ENCODE measurements at regions of chr12 and their contacts with region 1.

Region 1: DNA sequence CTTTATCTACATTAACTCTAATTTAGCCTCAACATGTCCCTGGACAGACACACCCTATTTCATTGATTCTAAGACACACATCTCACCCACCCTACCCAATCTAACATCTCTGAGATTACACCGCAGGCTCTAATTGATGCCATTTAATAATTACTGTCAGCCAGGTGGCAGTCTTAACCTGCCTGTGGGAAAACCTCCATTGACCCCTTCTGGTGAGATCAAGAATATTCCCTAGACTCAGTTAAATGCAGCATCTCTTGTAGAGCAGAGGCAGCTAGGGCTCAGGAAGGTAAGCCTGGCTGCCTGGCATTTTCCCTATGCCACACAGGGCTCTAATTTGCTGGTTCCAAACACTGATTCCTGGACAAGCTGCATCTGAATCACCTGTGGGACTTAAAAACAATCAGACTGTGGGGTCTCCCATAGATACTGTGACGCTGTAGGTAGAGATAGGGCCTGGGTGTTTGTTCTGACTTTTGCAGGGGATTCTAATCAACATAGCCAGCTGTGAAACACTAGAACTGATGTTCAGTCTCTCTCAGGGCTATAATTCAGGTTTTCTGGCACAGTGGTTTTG is 14.3 kb downstream of the MCRS1 start:
- DNase-seq: peak; percentile 66 to 75 (median 74)
- H3K4me3 ChIP-seq: no peak overlapping the region
- H3K27ac ChIP-seq: no peak overlapping the region
- H3K4me1 ChIP-seq: peaks cover 0 to 18% (median 12%) of the 10 kb centered on the region in 4 experiments
- H3K27me3 ChIP-seq: peaks cover 0 to 8% (median 0%) of the 10 kb centered on the region in 5 experiments

Region 2: DNA sequence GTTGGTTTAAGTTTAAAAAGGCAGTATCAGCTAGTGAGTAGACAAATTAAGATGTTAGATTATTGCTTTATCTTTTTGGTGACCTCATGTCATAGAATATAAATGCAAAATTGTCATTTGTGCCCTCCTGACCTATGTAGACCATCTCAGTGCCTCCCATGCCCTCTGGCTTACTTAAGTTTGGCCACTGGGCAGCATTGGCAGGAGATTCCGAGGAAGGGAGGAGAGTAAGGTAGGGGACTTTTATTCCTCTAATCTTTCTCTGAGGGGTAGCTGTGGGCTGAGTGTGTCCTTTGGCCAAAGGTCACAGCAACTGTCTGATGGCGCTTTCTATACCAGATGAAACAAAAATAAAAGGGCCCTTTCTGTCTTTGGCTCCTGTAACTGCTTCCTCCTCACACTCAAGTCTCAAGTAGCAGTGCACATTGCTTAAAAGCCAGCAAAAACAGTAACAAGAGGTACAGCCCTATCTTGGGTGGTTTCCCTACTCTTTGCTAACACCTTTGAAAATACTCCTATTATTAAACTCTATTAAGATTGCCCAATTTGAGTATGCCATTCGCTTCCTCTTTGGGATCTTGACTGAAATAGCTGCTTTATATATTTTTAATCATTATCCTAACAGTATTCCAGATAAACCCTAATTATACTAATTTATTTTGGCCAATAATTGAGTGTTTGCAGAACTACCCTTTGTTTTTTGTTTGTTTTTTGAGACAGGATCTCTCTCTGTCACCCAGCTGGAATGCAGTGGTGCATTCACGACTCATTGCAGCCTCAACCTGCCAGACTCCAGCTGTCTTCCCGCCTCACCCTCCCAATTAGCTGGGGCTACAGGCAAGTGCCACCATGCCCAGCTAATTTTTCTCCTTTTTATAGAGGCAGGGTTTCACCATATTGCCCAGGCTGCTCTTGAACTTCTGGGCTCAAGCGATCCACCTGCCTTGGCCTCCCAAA is 71.2 kb before region 1 on chr12:
- CTCF ChIA-PET with region 1: no interaction called
- POLR2A ChIA-PET with region 1: no interaction called
- DNase-seq: no peak
- H3K4me3 ChIP-seq: no peak overlapping the region
- H3K27ac ChIP-seq: no peak overlapping the region
- H3K4me1 ChIP-seq: peaks cover 0 to 5% (median 2%) of the 10 kb centered on the region in 4 experiments
- H3K27me3 ChIP-seq: no peaks in the 10 kb centered on the region

Region 3: GRCh38 chr12:49567611-49568441 is 14.2 kb after region 1 on chr12 and contains the start of gene MCRS1:
- CTCF ChIA-PET with region 1: interaction called, 107 read pairs
- POLR2A ChIA-PET with region 1: interaction called, 4 read pairs
- DNase-seq: peak; percentile 92 to 97 (median 97)
- H3K4me3 ChIP-seq: peak within 1 kb of the TSS; percentile 87 to 99 (median 94)
- H3K27ac ChIP-seq: peak within 1 kb of the TSS; percentile 94 to 96
- H3K4me1 ChIP-seq: peaks cover 4 to 54% (median 39%) of the 10 kb centered on the region in 4 experiments
- H3K27me3 ChIP-seq: no peaks in the 10 kb centered on the region

Region 4: GRCh38 chr12:49604856-49605255 is 51.3 kb after region 1 on chr12:
- CTCF ChIA-PET with region 1: interaction called, 11 read pairs
- POLR2A ChIA-PET with region 1: no interaction called
- DNase-seq: peak in 1 of 3 donors; percentile 6
- H3K4me3 ChIP-seq: no peak overlapping the region
- H3K27ac ChIP-seq: no peak overlapping the region
- H3K4me1 ChIP-seq: peaks cover 0 to 9% (median 7%) of the 10 kb centered on the region in 4 experiments
- H3K27me3 ChIP-seq: no peaks in the 10 kb centered on the region

Region 5: GRCh38 chr12:49662998-49663843 is 109.6 kb after region 1 on chr12:
- CTCF ChIA-PET with region 1: no interaction called
- POLR2A ChIA-PET with region 1: no interaction called
- DNase-seq: peak; percentile 68 to 90 (median 86)
- H3K4me3 ChIP-seq: peak overlapping the region in 4 of 7 experiments; percentile 42 to 61 (median 50)
- H3K27ac ChIP-seq: peak overlapping the region; percentile 25 to 75
- H3K4me1 ChIP-seq: peaks cover 23 to 57% (median 51%) of the 10 kb centered on the region in 4 experiments
- H3K27me3 ChIP-seq: no peaks in the 10 kb centered on the region